PC-3 (cell line): ENCODE measurements at regions of chr10 and their contacts with region 1.

Region 1: DNA sequence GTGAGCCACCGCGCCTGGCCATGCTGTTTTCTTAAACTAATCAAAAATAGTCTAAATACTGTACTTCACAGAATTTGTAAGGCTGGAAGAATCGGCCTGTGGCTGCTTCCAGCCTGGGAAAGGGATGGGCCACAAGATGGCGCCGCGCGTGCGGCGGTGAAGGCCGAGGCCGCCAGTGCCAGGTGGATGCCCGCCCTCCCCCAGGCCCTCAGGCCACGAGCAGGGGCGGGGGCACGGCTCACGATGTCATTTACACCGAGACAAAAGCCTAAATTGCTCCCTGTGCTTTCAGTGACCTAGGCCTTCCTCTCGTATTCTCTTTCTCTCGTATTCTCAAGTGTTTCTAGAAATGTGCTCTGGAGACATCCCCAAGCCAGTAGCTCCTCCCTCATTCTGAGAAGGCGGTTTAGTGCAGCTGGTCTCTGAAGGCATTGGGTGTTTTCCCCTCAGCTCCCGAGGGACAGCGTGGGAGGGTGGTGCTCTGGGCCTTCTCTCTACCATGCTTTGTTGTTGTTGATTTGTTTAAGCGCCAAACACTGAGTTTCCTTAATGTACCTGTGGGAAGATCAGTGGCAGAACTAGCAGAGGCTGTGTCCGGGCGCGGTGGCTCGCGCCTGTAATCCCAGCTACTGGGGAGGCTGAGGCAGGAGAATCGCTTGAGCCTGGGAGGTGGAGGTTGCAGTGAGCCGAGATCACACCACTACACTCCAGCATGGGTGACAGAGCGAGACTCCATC is 68.4 kb downstream of the CDC123 start:
- DNase-seq: peak; percentile 65
- ATAC-seq: peak; percentile 73
- H3K4me3 ChIP-seq: peak overlapping the region; percentile 39; the same call in 1 of the 2 replicates
- H3K27ac ChIP-seq: peak overlapping the region; percentile 81
- H3K4me1 ChIP-seq: peaks cover 14% of the 10 kb centered on the region
- H3K27me3 ChIP-seq: no peaks in the 10 kb centered on the region
- CTCF ChIP-seq: peak; percentile 68

Region 2: GRCh38 chr10:12419262-12419847 is 155.0 kb after region 1 on chr10:
- CTCF ChIA-PET with region 1: no interaction called
- POLR2A ChIA-PET with region 1: no interaction called
- intact Hi-C with region 1: loop called (anchors 1 kb)
- DNase-seq: peak; percentile 88
- ATAC-seq: peak; percentile 96
- H3K4me3 ChIP-seq: no peak overlapping the region
- H3K27ac ChIP-seq: peak overlapping the region; percentile 92
- H3K4me1 ChIP-seq: peaks cover 17% of the 10 kb centered on the region
- H3K27me3 ChIP-seq: no peaks in the 10 kb centered on the region
- CTCF ChIP-seq: no peak

Region 3: DNA sequence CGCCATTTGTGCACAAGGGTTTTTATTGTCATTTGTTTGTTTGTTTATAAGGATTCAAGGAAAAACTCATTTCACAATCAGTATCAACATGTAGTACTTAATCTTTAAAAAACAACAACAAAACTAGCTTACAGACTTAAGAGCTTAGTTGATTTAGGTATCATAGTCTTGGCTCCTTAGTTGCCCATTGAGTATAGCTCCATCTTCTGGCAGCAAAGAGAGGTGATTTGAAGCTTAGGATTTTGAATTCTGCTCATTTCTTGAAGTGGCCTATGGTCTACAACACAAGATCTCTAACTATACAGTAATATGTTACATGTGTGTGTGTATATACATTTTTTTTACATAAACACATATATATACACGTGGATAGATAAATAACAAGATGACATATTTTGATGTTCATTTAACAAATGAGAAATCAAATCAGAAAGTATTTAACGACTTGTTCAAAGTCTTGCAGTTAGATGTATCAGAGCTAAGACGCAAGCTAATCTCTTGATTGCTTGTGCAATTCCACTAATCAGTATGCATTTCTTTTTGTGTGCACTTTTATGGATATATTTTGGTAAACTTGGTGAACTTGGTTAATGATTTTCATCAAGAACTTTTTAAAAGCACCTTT is 392.3 kb after region 1 on chr10:
- CTCF ChIA-PET with region 1: interaction called, 9 read pairs
- POLR2A ChIA-PET with region 1: interaction called, 4 read pairs
- intact Hi-C with region 1: loop called (anchors 1 kb)
- DNase-seq: peak; percentile 60
- ATAC-seq: peak; percentile 43
- H3K4me3 ChIP-seq: no peak overlapping the region
- H3K27ac ChIP-seq: no peak overlapping the region
- H3K4me1 ChIP-seq: no peaks in the 10 kb centered on the region
- H3K27me3 ChIP-seq: no peaks in the 10 kb centered on the region
- CTCF ChIP-seq: peak; percentile 76

Region 4: DNA sequence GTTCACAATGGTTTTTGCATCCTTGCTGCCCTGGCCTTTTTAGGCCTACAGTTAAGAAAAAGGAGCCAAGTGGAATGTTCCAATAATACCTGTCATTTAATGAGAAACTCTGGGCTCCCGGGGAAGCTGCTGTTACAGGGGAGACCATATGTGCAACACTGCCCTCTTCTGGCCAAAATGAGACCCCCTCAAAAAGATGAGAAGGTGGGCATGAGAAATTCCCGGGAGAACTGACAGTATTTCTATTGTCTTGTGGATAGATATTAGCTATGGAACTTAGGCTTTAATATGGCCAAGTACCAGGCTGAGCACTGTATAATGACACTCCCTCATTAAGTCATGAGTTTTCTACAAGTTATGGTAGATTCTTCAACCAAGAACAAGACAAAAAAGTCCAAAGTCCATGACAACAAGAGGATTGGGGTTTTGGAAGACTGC is 637.8 kb after region 1 on chr10:
- CTCF ChIA-PET with region 1: no interaction called
- POLR2A ChIA-PET with region 1: no interaction called
- intact Hi-C with region 1: loop called (anchors 1 kb)
- DNase-seq: peak; percentile 53
- ATAC-seq: peak; percentile 40; the same call in 1 of the 2 replicates
- H3K4me3 ChIP-seq: no peak overlapping the region
- H3K27ac ChIP-seq: no peak overlapping the region
- H3K4me1 ChIP-seq: no peaks in the 10 kb centered on the region
- H3K27me3 ChIP-seq: no peaks in the 10 kb centered on the region
- CTCF ChIP-seq: peak; percentile 65